OCI-LY7 (cell line): ENCODE measurements at regions of chr18 and their contacts with region 1.

Region 1: GRCh38 chr18:68104036-68104435 is 587.5 kb upstream of the DSEL start:
- DNase-seq: no peak
- H3K4me3 ChIP-seq: no peak overlapping the region
- H3K27ac ChIP-seq: no peak overlapping the region
- H3K4me1 ChIP-seq: no peaks in the 10 kb centered on the region
- CTCF ChIP-seq: no peak

Region 2: GRCh38 chr18:68041327-68041726 is 62.7 kb before region 1 on chr18:
- CTCF ChIA-PET with region 1: no interaction called
- POLR2A ChIA-PET with region 1: no interaction called
- intact Hi-C with region 1: loop called (anchors 10 kb)
- DNase-seq: no peak
- H3K4me3 ChIP-seq: no peak overlapping the region
- H3K27ac ChIP-seq: no peak overlapping the region
- H3K4me1 ChIP-seq: no peaks in the 10 kb centered on the region
- CTCF ChIP-seq: no peak

Region 3: DNA sequence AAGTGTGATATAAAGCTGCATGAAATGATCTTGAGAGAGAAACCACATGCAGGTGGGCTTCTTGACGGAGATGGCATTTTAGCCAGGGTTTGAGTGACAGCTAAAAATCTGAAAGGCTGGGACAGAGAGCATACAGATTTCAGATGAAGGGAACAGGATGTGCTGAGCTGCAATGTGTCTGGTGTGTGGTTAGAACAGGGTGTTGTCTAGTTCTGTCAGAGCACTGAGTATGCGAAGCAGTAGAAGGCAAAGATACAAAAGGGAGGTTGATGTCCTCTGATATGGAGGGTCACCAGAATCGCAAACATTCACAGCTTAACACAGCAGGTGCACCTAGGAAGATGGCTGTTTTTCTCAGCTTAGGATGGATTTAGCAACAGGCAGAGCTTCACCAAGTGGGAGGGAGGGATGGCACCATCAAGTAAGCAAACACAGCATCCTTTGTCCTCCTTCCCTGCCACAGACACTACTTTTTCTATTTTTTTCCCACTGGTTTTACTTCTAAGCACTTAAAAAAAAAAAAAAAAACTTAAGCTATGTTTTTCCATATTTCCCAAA is 428.4 kb after region 1 on chr18:
- CTCF ChIA-PET with region 1: no interaction called
- POLR2A ChIA-PET with region 1: no interaction called
- intact Hi-C with region 1: no loop called
- DNase-seq: no peak
- H3K4me3 ChIP-seq: no peak overlapping the region
- H3K27ac ChIP-seq: no peak overlapping the region
- H3K4me1 ChIP-seq: no peaks in the 10 kb centered on the region
- CTCF ChIP-seq: no peak